ENCODE measurements at regions of chr1 and their contacts with region 1.

Region 1: GRCh38 chr1:97886199-97886598 is 34.6 kb downstream of the DPYD start:
- DNase-seq: no peak
- ATAC-seq: no peak
- H3K4me3 ChIP-seq: no peak overlapping the region
- H3K27ac ChIP-seq: no peak overlapping the region
- H3K4me1 ChIP-seq: no peaks in the 10 kb centered on the region
- H3K27me3 ChIP-seq: no peaks in the 10 kb centered on the region
- CTCF ChIP-seq: no peak
- EP300 ChIP-seq: no peak
- POLR2A ChIP-seq: no peak
- RAD21 ChIP-seq: no peak

Region 2: GRCh38 chr1:96487394-96487793 is 1398.8 kb before region 1 on chr1:
- CTCF ChIA-PET with region 1: no interaction called
- POLR2A ChIA-PET with region 1: interaction called, 10 read pairs
- RAD21 ChIA-PET with region 1: no interaction called
- SMC1A ChIA-PET with region 1: no interaction called
- in situ Hi-C with region 1: no loop called
- intact Hi-C with region 1: no loop called
- DNase-seq: no peak
- ATAC-seq: no peak
- H3K4me3 ChIP-seq: no peak overlapping the region
- H3K27ac ChIP-seq: no peak overlapping the region
- H3K4me1 ChIP-seq: no peaks in the 10 kb centered on the region
- H3K27me3 ChIP-seq: no peaks in the 10 kb centered on the region
- CTCF ChIP-seq: no peak
- EP300 ChIP-seq: no peak
- POLR2A ChIP-seq: no peak
- RAD21 ChIP-seq: no peak

Region 3: DNA sequence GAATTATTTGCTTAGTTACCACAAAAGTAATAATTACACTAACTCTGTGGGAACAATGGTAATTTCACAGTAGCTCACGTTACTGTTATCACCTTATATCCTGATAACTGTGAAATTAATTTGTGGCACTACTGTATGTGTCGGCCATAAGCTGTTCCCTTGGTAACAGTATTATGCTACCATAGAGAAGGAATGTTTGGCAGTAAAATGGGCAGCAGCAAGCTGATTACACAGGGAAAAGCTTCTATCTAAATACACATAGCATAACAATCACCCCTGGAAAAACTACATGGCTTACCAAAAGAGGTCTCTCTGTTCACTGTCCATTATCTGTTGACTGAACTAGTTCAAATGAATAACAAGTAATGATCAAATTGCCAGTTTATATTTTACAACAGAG is 89.5 kb before region 1 on chr1:
- CTCF ChIA-PET with region 1: no interaction called
- POLR2A ChIA-PET with region 1: no interaction called
- RAD21 ChIA-PET with region 1: no interaction called
- SMC1A ChIA-PET with region 1: no interaction called
- in situ Hi-C with region 1: no loop called
- intact Hi-C with region 1: no loop called
- DNase-seq: no peak
- ATAC-seq: no peak
- H3K4me3 ChIP-seq: no peak overlapping the region
- H3K27ac ChIP-seq: no peak overlapping the region
- H3K4me1 ChIP-seq: peaks cover 4% of the 10 kb centered on the region; the same call in 1 of the 2 replicates
- H3K27me3 ChIP-seq: no peaks in the 10 kb centered on the region
- CTCF ChIP-seq: no peak
- EP300 ChIP-seq: no peak
- POLR2A ChIP-seq: no peak
- RAD21 ChIP-seq: no peak

Region 4: DNA sequence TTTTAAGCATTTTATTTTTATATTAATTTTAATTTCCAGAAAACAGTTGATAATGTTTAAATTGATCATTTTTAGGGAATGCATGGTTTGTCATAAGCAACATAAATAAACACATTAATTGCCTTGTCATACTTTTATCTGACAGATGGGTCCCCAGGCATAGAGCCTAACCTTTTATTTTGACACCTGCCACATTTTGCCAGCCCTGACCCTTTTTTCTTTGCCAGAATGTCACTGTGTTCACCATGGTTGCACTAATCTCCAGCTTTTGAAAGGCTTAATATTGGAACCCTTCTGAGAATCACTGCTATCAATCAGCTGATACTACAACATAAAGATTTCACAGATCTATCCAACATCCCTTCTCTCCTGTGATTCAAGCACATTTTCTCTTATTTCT is 90.6 kb after region 1 on chr1:
- CTCF ChIA-PET with region 1: no interaction called
- POLR2A ChIA-PET with region 1: no interaction called
- RAD21 ChIA-PET with region 1: no interaction called
- SMC1A ChIA-PET with region 1: no interaction called
- in situ Hi-C with region 1: no loop called
- intact Hi-C with region 1: no loop called
- DNase-seq: no peak
- ATAC-seq: no peak
- H3K4me3 ChIP-seq: no peak overlapping the region
- H3K27ac ChIP-seq: no peak overlapping the region
- H3K4me1 ChIP-seq: no peaks in the 10 kb centered on the region
- H3K27me3 ChIP-seq: no peaks in the 10 kb centered on the region
- CTCF ChIP-seq: no peak
- EP300 ChIP-seq: no peak
- POLR2A ChIP-seq: no peak
- RAD21 ChIP-seq: no peak

Region 5: GRCh38 chr1:98053471-98054366 is 167.5 kb after region 1 on chr1:
- CTCF ChIA-PET with region 1: no interaction called
- POLR2A ChIA-PET with region 1: no interaction called
- RAD21 ChIA-PET with region 1: no interaction called
- SMC1A ChIA-PET with region 1: no interaction called
- in situ Hi-C with region 1: no loop called
- intact Hi-C with region 1: no loop called
- DNase-seq: no peak
- ATAC-seq: peak; percentile 99
- H3K4me3 ChIP-seq: peak overlapping the region; percentile 24; the same call in 1 of the 2 replicates
- H3K27ac ChIP-seq: no peak overlapping the region
- H3K4me1 ChIP-seq: no peaks in the 10 kb centered on the region
- H3K27me3 ChIP-seq: peaks cover 1 to 11% of the 10 kb centered on the region in 2 experiments; a peak in 2 of 4 replicates
- CTCF ChIP-seq: peak; percentile 66 to 86 (median 71); a peak in 5 of 6 replicates
- EP300 ChIP-seq: no peak
- POLR2A ChIP-seq: no peak
- RAD21 ChIP-seq: peak; percentile 85

Measured in GM12878 (cell line).